ENCODE measurements at regions of chr14 and their contacts with region 1.

Region 1: GRCh38 chr14:63840981-63841380 is 11.8 kb upstream of the SYNE2 start:
- DNase-seq: no peak
- H3K4me3 ChIP-seq: no peak overlapping the region
- H3K27ac ChIP-seq: no peak overlapping the region
- H3K4me1 ChIP-seq: no peaks in the 10 kb centered on the region
- H3K27me3 ChIP-seq: no peaks in the 10 kb centered on the region
- CTCF ChIP-seq: peak; percentile 32; the same call in 1 of the 2 replicates

Region 2: GRCh38 chr14:63993992-63994391 is 153.0 kb after region 1 on chr14:
- CTCF ChIA-PET with region 1: no interaction called
- POLR2A ChIA-PET with region 1: no interaction called
- intact Hi-C with region 1: loop called (anchors 5 kb)
- DNase-seq: no peak
- H3K4me3 ChIP-seq: no peak overlapping the region
- H3K27ac ChIP-seq: no peak overlapping the region
- H3K4me1 ChIP-seq: no peaks in the 10 kb centered on the region
- H3K27me3 ChIP-seq: no peaks in the 10 kb centered on the region
- CTCF ChIP-seq: peak; percentile 55; the same call in 1 of the 2 replicates

Measured in PC-9 (cell line).